RWPE1 (cell line): ENCODE measurements at regions of chr17 and their contacts with region 1.

Region 1: GRCh38 chr17:76121932-76122430 is 18.4 kb upstream of the EXOC7 start:
- DNase-seq: no peak
- H3K27ac ChIP-seq: no peak overlapping the region
- CTCF ChIP-seq: no peak

Region 2: GRCh38 chr17:76141212-76142038 is 19.4 kb after region 1 on chr17 and contains the start of gene FOXJ1:
- CTCF ChIA-PET with region 1: interaction called, 12 read pairs
- POLR2A ChIA-PET with region 1: no interaction called
- DNase-seq: peak; percentile 98
- H3K27ac ChIP-seq: no peak within 1 kb of the TSS
- CTCF ChIP-seq: no peak

Region 3: DNA sequence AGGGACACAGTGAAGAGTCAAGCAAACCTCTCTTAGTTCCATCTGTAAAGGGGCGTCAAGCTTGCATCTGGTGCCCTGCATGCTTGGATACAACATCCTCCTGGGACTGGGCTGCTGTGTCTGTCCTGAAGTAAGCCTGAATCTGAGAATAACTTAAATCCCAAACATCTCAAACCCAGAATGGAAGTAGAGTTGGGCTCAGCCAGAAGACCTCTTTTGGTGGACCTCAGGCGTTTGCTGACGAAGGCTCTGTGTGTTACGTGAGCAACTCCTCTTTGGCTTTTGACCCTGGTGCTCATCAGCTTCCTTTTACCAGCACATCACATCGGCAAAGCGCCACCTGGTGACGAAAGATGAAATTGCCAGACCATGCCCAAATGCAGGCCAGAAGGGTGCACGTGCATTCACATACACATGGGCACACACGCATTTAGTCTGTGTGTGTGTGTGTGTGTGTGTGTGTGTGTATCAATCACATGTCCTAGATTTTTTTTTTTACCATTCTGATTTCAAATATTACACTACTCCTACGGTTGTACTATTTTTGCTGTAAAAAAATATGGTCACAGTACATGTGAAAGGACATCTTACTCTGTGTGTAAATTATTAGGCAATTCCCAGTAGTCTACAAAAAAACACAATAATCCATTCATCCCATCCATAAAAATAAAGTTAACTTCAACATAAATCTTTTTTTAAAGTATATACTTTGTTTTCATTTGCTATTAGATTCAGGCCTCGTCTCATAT is 60.2 kb after region 1 on chr17:
- CTCF ChIA-PET with region 1: interaction called, 23 read pairs
- POLR2A ChIA-PET with region 1: no interaction called
- DNase-seq: peak; percentile 86
- H3K27ac ChIP-seq: no peak overlapping the region
- CTCF ChIP-seq: peak; percentile 93